Heart left ventricle (tissue), 16 donors: ENCODE measurements at regions of chr16 and their contacts with region 1.

Region 1: DNA sequence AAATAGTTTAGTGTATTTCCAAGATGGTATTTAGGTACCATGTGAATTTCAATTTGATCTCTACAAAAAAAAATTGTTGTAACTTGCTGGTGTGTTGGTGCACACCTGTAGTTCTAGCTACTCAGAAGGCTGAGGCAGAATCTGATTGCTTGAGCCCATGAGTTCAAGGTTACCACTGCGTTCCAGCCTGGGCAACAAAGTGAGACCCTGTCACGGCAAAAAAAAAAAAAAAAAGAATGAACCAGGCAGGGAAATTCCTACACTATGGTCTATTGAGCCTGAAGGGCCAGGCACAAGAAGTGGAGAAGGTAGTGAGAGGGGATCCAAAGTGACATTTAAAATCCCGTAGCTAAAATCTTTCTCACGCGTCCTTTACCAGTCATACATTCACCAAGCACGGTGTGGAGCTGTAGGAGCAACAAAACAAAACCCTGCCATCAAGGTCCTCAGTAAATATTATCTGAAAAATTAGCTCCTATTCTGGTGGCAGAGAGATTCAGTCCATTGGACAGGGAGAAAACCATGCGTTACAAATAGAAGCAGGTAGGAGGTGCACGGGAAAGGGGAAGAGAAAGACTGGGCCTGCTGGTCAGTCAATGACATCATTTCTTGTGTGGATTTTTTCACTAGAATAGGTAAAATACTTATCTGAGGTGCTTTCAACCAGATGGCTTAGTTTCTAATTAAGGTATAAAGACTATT is 27.3 kb downstream of the TXNDC11 start:
- DNase-seq: no peak
- ATAC-seq: no peak
- H3K4me3 ChIP-seq: no peak overlapping the region
- H3K27ac ChIP-seq: peak overlapping the region in 1 of 12 donors; percentile 9
- H3K4me1 ChIP-seq: peaks cover 0 to 12% (median under 1%) of the 10 kb centered on the region in 12 donors
- H3K27me3 ChIP-seq: no peaks in the 10 kb centered on the region
- CTCF ChIP-seq: no peak
- POLR2A ChIP-seq: no peak

Region 2: GRCh38 chr16:10964039-10964890 is 751.1 kb before region 1 on chr16:
- intact Hi-C with region 1: loop called in 2 of 10 experiments (anchors 10 kb)
- DNase-seq: peak; percentile 79 to 90 (median 84)
- ATAC-seq: peak; percentile 78 to 89 (median 84)
- H3K4me3 ChIP-seq: no peak overlapping the region
- H3K27ac ChIP-seq: peak overlapping the region in 2 of 12 donors; percentile 8 to 43
- H3K4me1 ChIP-seq: peaks cover 0 to 33% (median 20%) of the 10 kb centered on the region in 12 donors
- H3K27me3 ChIP-seq: no peaks in the 10 kb centered on the region
- CTCF ChIP-seq: peak; percentile 90 to 98 (median 94)
- POLR2A ChIP-seq: no peak

Region 3: DNA sequence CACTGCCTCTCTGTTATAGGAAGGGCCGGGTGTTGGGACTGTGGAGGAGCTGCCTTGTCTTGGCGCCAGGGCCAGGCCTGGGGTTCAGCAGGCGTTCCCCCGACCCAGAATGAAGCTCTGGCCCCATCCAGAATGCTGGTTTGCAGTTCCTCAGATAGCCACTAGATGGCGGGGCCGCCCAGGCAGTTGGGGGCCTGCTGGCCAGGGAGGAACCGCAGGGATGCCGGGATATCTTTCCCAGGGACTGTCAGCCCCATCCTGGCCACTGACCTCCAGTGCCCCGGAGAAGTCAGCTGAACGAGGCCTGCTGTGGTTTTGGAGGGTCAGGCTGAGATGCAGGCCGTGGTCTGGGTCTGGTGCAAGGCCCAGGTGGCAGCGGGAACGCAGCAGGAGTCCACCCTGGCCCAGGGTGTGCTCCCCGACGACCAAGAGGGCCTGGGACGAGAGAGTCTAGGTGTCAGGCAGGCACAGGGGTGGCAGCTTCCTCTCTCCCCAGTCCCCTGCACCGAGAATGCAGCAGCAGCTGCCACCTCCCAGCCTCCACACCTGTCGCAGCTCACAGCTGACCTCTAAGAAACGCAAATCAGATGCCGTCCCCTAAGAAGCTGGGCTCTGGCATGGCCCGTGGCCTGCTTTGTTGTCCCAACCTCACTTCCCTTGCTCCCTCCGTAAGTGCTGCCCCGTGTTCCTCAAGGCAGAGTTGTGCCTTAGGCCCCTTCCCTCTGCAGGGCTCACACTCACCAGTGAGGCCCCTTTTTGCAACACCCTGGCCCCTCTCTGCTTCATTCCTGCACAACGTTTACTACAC is 319.0 kb before region 1 on chr16:
- intact Hi-C with region 1: loop called in 7 of 10 experiments (anchors 2 to 5 kb)
- DNase-seq: peak; percentile 71 to 83 (median 76)
- ATAC-seq: peak; percentile 63 to 84 (median 84)
- H3K4me3 ChIP-seq: no peak overlapping the region
- H3K27ac ChIP-seq: peak overlapping the region in 3 of 12 donors; percentile 25 to 54 (median 30)
- H3K4me1 ChIP-seq: peaks cover 0 to 7% (median 2%) of the 10 kb centered on the region in 12 donors
- H3K27me3 ChIP-seq: peaks cover 0 to 3% (median 0%) of the 10 kb centered on the region in 9 donors
- CTCF ChIP-seq: peak; percentile 96 to 100 (median 98)
- POLR2A ChIP-seq: no peak

Region 4: DNA sequence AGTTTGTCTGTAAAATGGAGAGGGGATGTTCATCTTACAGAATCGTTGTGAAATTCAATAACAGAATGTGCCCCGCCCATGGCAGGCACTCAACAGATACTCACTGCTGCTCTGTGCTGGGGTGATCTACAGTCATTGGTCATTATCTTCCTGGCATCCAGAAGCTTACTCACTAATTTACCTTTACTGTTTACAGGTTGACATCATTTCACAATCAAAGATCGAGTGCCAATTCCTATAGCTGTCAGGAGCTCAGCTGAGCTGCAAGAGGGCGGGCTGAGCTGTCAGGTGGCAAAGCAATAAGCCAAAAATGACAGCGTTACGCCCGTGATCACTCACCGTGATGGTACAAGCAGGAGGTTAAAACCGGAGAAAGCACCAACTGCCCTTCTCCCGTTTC is 179.9 kb before region 1 on chr16:
- intact Hi-C with region 1: loop called in 9 of 10 experiments (anchors 1 to 5 kb)
- DNase-seq: no peak
- ATAC-seq: no peak
- H3K4me3 ChIP-seq: no peak overlapping the region
- H3K27ac ChIP-seq: no peak overlapping the region
- H3K4me1 ChIP-seq: peaks cover 0 to 8% (median 0%) of the 10 kb centered on the region in 12 donors
- H3K27me3 ChIP-seq: no peaks in the 10 kb centered on the region
- CTCF ChIP-seq: no peak
- POLR2A ChIP-seq: no peak

Region 5: DNA sequence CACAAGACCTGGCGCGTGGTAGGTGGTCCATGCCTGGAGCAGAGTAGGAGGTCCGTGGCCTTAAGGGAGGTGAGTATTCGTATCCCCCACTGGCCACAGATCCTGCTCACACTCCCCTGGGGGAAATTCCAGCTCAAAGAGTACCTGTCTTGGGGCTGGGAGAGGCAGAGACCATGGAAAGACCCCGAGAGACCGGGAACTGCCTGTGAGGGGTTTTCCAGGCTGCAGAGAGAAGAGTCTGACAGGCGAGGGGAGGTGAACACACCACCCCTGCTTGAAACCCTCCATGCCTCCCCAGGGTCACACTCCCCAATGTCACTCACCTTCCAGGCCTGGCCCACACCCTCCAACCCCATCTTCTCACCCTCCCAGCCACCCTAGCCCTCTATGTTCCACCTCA is 59.7 kb before region 1 on chr16:
- intact Hi-C with region 1: no loop called
- DNase-seq: no peak
- ATAC-seq: no peak
- H3K4me3 ChIP-seq: no peak overlapping the region
- H3K27ac ChIP-seq: no peak overlapping the region
- H3K4me1 ChIP-seq: peaks cover 0 to 12% (median 5%) of the 10 kb centered on the region in 12 donors
- H3K27me3 ChIP-seq: no peaks in the 10 kb centered on the region
- CTCF ChIP-seq: no peak
- POLR2A ChIP-seq: no peak

Region 6: GRCh38 chr16:11667824-11668622 is 47.4 kb before region 1 on chr16 and contains the start of gene SNN:
- intact Hi-C with region 1: loop called in 2 of 10 experiments (anchors 5 kb)
- DNase-seq: peak; percentile 90 to 96 (median 92)
- ATAC-seq: peak; percentile 84 to 93 (median 90)
- H3K4me3 ChIP-seq: peak within 1 kb of the TSS; percentile 70 to 100 (median 90)
- H3K27ac ChIP-seq: peak within 1 kb of the TSS; percentile 47 to 90 (median 84)
- H3K4me1 ChIP-seq: peaks cover 3 to 64% (median 47%) of the 10 kb centered on the region in 12 donors
- H3K27me3 ChIP-seq: no peaks in the 10 kb centered on the region
- CTCF ChIP-seq: no peak
- POLR2A ChIP-seq: no peak
- total RNA-seq, gene SNN: 17.0 to 60.0 (median 36.4) TPM

Region 7: GRCh38 chr16:11675561-11676511 is 39.6 kb before region 1 on chr16:
- intact Hi-C with region 1: loop called in 3 of 10 experiments (anchors 2 to 5 kb)
- DNase-seq: peak in 3 of 5 donors; percentile 47 to 85 (median 75)
- ATAC-seq: peak; percentile 12 to 61 (median 36)
- H3K4me3 ChIP-seq: no peak overlapping the region
- H3K27ac ChIP-seq: peak overlapping the region in 9 of 12 donors; percentile 3 to 76 (median 39)
- H3K4me1 ChIP-seq: peaks cover 14 to 97% (median 69%) of the 10 kb centered on the region in 12 donors
- H3K27me3 ChIP-seq: no peaks in the 10 kb centered on the region
- CTCF ChIP-seq: no peak
- POLR2A ChIP-seq: no peak

Region 8: DNA sequence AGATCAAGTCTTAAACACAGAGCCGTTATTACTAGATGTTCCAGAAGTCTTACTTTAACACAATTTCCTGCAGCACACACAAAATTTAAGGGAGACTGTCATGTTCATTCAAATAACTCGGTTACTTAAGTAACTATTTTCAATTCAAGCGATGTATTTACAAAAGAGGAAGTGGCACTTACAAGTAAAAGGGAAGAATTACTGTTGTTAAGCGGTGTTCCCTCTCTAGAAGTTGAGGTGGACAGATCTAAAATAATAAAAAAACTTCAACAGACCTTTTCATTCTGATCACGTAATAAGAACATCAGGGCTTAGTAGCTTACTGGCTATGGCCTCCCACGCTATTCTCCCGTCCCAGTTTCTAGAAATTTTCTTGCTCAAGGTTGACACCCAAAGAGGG is 53.5 kb after region 1 on chr16:
- intact Hi-C with region 1: no loop called
- DNase-seq: no peak
- ATAC-seq: no peak
- H3K4me3 ChIP-seq: no peak overlapping the region
- H3K27ac ChIP-seq: peak overlapping the region in 1 of 12 donors; percentile 53
- H3K4me1 ChIP-seq: peaks cover 0 to 10% (median 0%) of the 10 kb centered on the region in 12 donors
- H3K27me3 ChIP-seq: no peaks in the 10 kb centered on the region
- CTCF ChIP-seq: no peak
- POLR2A ChIP-seq: no peak